H1 (cell line): ENCODE measurements at regions of chr5 and their contacts with region 1.

Region 1: GRCh38 chr5:115169487-115170133 is at the start of gene TRIM36:
- DNase-seq: peak; percentile 88 to 99
- H3K4me3 ChIP-seq: peak within 1 kb of the TSS; percentile 75 to 94 (median 90)
- H3K27ac ChIP-seq: peak within 1 kb of the TSS; percentile 25; the same call in 1 of the 2 replicates
- H3K4me1 ChIP-seq: peaks cover 0 to 4% (median 0%) of the 10 kb centered on the region in 4 experiments; a peak in 3 of 7 replicates
- H3K27me3 ChIP-seq: peaks cover 3 to 23% (median 11%) of the 10 kb centered on the region in 4 experiments
- CTCF ChIP-seq: peak in 2 of 3 experiments; percentile 7 to 24; a peak in 2 of 4 replicates
- EP300 ChIP-seq: no peak
- POLR2A ChIP-seq: peak; percentile 84 to 90
- RAD21 ChIP-seq: peak; percentile 2 to 20; a peak in 1 of 4 replicates
- total RNA-seq, gene TRIM36: 14.1 and 16.5 TPM in 2 replicates

Region 2: DNA sequence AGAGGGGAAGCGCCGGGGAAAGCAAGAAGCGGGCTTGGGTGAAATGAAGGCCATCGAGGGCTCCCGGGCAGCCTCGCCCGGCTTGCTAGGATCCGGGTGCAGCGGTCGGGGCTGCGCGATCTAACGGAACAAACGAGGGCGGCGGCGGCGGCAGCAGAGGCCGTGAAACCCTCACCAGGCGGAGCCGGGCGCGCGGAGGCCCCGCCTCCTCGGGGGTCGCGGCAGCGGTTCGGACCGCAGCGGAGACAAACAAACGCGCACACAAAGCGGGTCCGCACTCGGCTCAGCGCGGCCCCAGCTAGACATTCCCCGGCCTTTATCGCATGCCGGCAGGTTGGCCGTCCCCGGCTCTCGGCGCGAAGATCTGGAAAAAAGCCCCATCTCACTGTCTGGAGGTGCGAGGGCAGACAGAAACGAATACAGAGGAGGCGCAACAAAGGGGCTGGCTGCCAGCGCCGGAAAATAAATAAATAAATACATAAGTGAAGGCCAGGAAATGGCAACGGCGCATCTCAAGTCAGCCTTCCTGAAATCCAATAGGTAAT is 10.6 kb after region 1 on chr5:
- CTCF ChIA-PET with region 1: interaction called, 16 read pairs
- POLR2A ChIA-PET with region 1: interaction called, 13 read pairs
- DNase-seq: peak in 1 of 2 experiments; percentile 80
- H3K4me3 ChIP-seq: peak overlapping the region; percentile 38 to 67 (median 54)
- H3K27ac ChIP-seq: no peak overlapping the region
- H3K4me1 ChIP-seq: peaks cover 0 to 4% (median 2%) of the 10 kb centered on the region in 4 experiments; a peak in 5 of 7 replicates
- H3K27me3 ChIP-seq: peaks cover 25 to 55% (median 51%) of the 10 kb centered on the region in 4 experiments
- CTCF ChIP-seq: no peak
- EP300 ChIP-seq: no peak
- POLR2A ChIP-seq: no peak
- RAD21 ChIP-seq: no peak

Region 3: GRCh38 chr5:115262321-115263077 is 92.9 kb after region 1 on chr5 and contains the start of gene PGGT1B:
- CTCF ChIA-PET with region 1: no interaction called
- POLR2A ChIA-PET with region 1: interaction called, 11 read pairs
- DNase-seq: peak; percentile 44 to 86
- H3K4me3 ChIP-seq: peak within 1 kb of the TSS; percentile 92 to 100 (median 94)
- H3K27ac ChIP-seq: peak within 1 kb of the TSS; percentile 76
- H3K4me1 ChIP-seq: peaks cover 0 to 4% (median 0%) of the 10 kb centered on the region in 4 experiments; a peak in 3 of 7 replicates
- H3K27me3 ChIP-seq: no peaks in the 10 kb centered on the region
- CTCF ChIP-seq: no peak
- EP300 ChIP-seq: no peak
- POLR2A ChIP-seq: peak; percentile 62 to 93
- RAD21 ChIP-seq: no peak; a peak in 1 of 4 replicates
- total RNA-seq, gene PGGT1B: 43.1 and 43.3 TPM in 2 replicates